MCF 10A (cell line): ENCODE measurements at regions of chr2 and their contacts with region 1.

Region 1: GRCh38 chr2:26605195-26605998 is 35.8 kb downstream of the CIB4 start:
- DNase-seq: peak; percentile 73
- H3K4me3 Mint-ChIP-seq: no peak overlapping the region
- H3K27ac Mint-ChIP-seq: no peak overlapping the region
- H3K4me1 Mint-ChIP-seq: no peaks in the 10 kb centered on the region
- H3K27me3 Mint-ChIP-seq: peaks cover 85% of the 10 kb centered on the region
- CTCF ChIP-seq: peak; percentile 83

Region 2: DNA sequence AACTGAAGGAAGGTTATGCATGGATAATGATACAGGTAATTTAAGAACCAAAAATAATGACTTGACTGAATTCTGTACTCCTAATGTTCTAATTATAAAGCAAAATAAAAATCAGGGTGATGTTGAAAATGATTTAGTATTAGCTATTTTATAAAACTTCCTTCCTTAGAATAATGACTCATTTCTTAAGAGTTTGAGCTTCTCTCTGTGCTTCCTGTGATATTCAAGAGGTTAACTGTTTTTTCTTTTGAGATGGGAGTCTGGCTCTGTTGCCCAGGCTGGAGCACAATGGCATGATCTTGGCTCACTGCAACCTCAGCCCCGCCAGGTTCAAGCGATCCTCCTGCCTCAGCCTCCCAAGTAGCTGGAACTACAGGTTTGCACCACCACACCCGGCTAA is 375.8 kb before region 1 on chr2:
- CTCF ChIA-PET with region 1: no interaction called
- POLR2A ChIA-PET with region 1: no interaction called
- intact Hi-C with region 1: no loop called
- DNase-seq: no peak
- H3K4me3 Mint-ChIP-seq: no peak overlapping the region
- H3K27ac Mint-ChIP-seq: no peak overlapping the region
- H3K4me1 Mint-ChIP-seq: no peaks in the 10 kb centered on the region
- H3K27me3 Mint-ChIP-seq: no peaks in the 10 kb centered on the region
- CTCF ChIP-seq: no peak

Region 3: DNA sequence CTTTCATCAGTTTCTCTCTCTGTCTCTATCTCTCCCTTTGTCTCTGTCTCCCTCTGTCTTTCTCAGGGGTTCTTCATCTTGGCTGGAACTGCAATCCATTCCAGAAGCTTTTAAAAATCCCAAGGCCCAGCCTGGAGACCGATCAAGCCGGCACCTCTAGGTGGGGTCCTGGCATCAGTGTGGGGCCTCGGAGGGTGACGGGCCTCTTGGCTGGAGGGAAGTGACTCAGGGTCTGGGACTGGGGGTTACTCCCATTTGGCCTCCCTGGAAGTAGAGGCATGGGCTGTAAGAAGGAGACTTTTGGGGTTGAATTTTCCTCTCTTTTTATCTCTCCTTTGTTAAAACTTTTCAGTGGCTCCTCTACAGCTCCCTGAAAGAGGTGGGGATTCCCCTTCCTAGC is 74.7 kb before region 1 on chr2:
- CTCF ChIA-PET with region 1: no interaction called
- POLR2A ChIA-PET with region 1: no interaction called
- intact Hi-C with region 1: no loop called
- DNase-seq: no peak
- H3K4me3 Mint-ChIP-seq: no peak overlapping the region
- H3K27ac Mint-ChIP-seq: no peak overlapping the region
- H3K4me1 Mint-ChIP-seq: no peaks in the 10 kb centered on the region
- H3K27me3 Mint-ChIP-seq: peaks cover 49% of the 10 kb centered on the region
- CTCF ChIP-seq: no peak

Region 4: DNA sequence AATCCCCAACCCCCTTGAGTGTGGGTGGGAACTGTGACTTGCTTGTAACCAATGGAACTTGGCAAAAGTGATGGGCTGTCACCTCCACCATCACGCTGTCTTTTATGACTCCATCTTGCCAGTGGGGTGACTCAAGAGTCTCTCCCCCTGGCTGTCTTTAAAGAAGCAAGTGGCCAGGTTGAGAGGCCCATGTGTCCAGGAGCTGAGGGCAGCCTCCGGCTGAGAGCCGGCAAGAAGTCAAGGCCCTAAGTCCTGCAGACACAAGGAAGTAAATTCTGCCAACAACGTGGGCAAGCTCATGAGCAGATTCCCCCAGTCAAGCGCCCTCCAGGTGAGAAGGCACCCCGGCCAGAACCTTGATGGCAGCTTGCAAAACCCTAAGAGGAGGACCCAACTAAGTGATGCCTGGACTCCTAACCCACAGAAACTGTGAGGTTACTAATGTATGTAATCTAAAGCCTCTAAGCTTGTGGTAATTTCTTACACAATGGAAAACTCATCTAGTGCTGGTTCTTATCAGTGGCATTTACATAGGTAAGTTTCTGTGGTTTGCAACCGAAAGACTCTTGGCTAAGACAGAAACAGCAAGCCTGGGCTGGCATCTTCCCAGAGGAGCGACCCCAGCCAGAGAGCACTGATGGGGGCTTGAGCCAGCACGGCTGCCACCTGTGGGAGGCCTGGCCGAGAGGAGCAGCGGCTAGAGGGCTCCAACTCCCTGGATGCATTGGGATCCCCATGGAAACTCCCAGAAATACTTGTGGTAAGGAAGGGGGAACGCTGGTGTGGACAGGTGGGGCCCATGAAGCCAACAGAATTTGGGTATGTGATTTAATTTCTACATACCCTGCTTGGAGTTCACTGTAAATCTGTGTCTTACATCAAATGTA is 13.5 kb before region 1 on chr2:
- CTCF ChIA-PET with region 1: interaction called, 18 read pairs
- POLR2A ChIA-PET with region 1: no interaction called
- intact Hi-C with region 1: no loop called
- DNase-seq: no peak
- H3K4me3 Mint-ChIP-seq: no peak overlapping the region
- H3K27ac Mint-ChIP-seq: no peak overlapping the region
- H3K4me1 Mint-ChIP-seq: no peaks in the 10 kb centered on the region
- H3K27me3 Mint-ChIP-seq: peaks cover 77% of the 10 kb centered on the region
- CTCF ChIP-seq: no peak

Region 5: DNA sequence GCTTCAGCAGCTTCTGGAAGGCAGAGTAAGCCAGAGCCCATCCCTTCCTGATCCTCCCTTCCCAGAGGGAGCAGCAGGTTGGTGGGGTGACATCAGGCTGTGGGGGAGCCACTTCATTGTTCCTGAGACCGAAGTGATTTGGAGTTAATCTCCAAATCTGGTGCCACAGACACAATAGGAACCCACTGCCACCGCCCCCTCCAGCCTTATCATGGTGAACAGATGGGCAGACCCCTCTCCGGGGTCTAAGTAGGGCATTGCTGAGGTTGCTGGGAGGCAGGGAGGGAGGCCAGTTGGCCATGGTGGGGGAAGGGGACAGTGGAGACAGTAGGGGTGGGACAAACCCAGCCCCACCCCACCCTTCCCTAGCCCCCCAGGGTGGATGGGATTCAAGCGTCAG is 133.1 kb after region 1 on chr2:
- CTCF ChIA-PET with region 1: interaction called, 305 read pairs
- POLR2A ChIA-PET with region 1: no interaction called
- intact Hi-C with region 1: no loop called
- DNase-seq: no peak
- H3K4me3 Mint-ChIP-seq: no peak overlapping the region
- H3K27ac Mint-ChIP-seq: no peak overlapping the region
- H3K4me1 Mint-ChIP-seq: peaks cover 6% of the 10 kb centered on the region
- H3K27me3 Mint-ChIP-seq: no peaks in the 10 kb centered on the region
- CTCF ChIP-seq: no peak

Region 6: GRCh38 chr2:26752656-26753055 is 147.3 kb after region 1 on chr2:
- CTCF ChIA-PET with region 1: interaction called, 305 read pairs
- POLR2A ChIA-PET with region 1: interaction called, 3 read pairs
- intact Hi-C with region 1: no loop called
- DNase-seq: no peak
- H3K4me3 Mint-ChIP-seq: no peak overlapping the region
- H3K27ac Mint-ChIP-seq: no peak overlapping the region
- H3K4me1 Mint-ChIP-seq: peaks cover 3% of the 10 kb centered on the region
- H3K27me3 Mint-ChIP-seq: no peaks in the 10 kb centered on the region
- CTCF ChIP-seq: no peak

Region 7: GRCh38 chr2:26942543-26943295 is 337.3 kb after region 1 on chr2:
- CTCF ChIA-PET with region 1: no interaction called
- POLR2A ChIA-PET with region 1: no interaction called
- intact Hi-C with region 1: loop called (anchors 5 kb)
- DNase-seq: peak; percentile 63
- H3K4me3 Mint-ChIP-seq: no peak overlapping the region
- H3K27ac Mint-ChIP-seq: no peak overlapping the region
- H3K4me1 Mint-ChIP-seq: peaks cover 7% of the 10 kb centered on the region
- H3K27me3 Mint-ChIP-seq: peaks cover 32% of the 10 kb centered on the region
- CTCF ChIP-seq: peak; percentile 68